ENCODE measurements at regions of chr9 and their contacts with region 1.

Region 1: GRCh38 chr9:14768405-14769229 is 46.1 kb upstream of the CER1 start:
- DNase-seq: peak in 1 of 2 donors; percentile 78
- H3K4me3 ChIP-seq: no peak overlapping the region
- H3K27ac ChIP-seq: no peak overlapping the region
- H3K4me1 ChIP-seq: peaks cover 0 to 4% (median 0%) of the 10 kb centered on the region in 4 donors
- H3K27me3 ChIP-seq: no peaks in the 10 kb centered on the region
- CTCF ChIP-seq: peak in 5 of 7 experiments; percentile 42 to 71 (median 56)
- EP300 ChIP-seq: no peak
- POLR2A ChIP-seq: no peak

Region 2: DNA sequence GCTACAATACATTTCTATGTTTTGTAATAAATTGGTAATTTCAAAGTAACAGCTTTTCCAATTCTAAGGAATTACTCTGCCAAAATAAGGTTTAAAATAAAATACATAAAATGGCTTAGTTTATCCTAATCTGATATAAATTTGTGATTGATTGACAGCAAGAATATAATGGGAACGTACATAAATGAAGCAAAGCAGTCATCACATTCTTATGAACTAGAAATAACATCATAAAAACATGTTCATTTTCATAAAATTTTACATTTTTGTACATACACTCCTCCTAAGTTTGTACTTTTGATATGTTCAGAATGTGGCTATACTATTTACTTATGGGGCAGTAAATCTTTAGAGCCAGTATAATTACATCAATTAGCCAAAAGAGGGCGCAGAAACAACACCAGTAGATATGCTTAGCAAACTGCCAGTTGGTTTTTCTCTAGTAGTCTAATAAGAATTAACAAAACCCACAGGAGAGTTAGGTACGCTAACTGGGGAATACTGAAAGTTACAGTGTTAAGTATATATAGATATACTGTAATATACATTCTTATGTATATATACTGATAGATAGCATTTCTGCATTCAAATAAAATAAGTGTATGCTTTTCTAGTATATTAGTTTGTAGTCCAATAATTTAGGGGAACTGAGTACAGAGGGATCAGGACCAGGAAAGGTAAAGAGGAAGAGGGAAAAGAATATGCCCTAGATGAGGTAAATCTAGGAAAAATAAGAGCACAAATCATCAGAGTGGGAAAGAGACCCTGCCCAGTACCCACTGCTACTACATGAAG is 152.2 kb before region 1 on chr9:
- intact Hi-C with region 1: loop called (anchors 10 kb)
- DNase-seq: peak in 1 of 2 donors; percentile 82
- H3K4me3 ChIP-seq: no peak overlapping the region
- H3K27ac ChIP-seq: no peak overlapping the region
- H3K4me1 ChIP-seq: peaks cover 0 to 15% (median 0%) of the 10 kb centered on the region in 4 donors
- H3K27me3 ChIP-seq: no peaks in the 10 kb centered on the region
- CTCF ChIP-seq: peak in 4 of 7 experiments; percentile 31 to 61 (median 40)
- EP300 ChIP-seq: no peak
- POLR2A ChIP-seq: no peak

Region 3: GRCh38 chr9:14722391-14723035 is 46.1 kb before region 1 on chr9 and contains the start of gene CER1:
- intact Hi-C with region 1: no loop called
- DNase-seq: no peak
- H3K4me3 ChIP-seq: no peak within 1 kb of the TSS
- H3K27ac ChIP-seq: no peak within 1 kb of the TSS
- H3K4me1 ChIP-seq: no peaks in the 10 kb centered on the region
- H3K27me3 ChIP-seq: peaks cover 0 to 17% (median 0%) of the 10 kb centered on the region in 3 donors
- CTCF ChIP-seq: no peak
- EP300 ChIP-seq: no peak
- POLR2A ChIP-seq: no peak
- total RNA-seq, gene CER1: not detected

Region 4: DNA sequence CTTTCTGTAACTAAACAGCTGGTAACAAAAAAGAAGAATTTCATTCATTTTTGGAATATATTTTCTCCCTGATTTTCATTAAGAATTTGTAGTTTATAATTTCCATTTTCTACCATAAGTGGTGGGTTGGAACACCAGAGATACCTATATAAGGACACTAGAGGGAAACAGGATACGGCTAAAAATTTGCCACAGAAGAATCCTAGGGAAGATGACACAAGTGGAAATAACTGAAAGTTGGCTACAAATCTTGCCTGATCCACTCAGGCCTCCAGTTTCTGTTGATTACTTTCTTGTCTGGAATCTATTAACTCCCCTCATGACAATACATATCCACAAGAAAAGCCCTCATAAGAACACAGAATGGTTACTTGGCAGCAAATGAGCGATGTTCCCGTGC is 94.8 kb after region 1 on chr9:
- intact Hi-C with region 1: no loop called
- DNase-seq: no peak
- H3K4me3 ChIP-seq: no peak overlapping the region
- H3K27ac ChIP-seq: no peak overlapping the region
- H3K4me1 ChIP-seq: no peaks in the 10 kb centered on the region
- H3K27me3 ChIP-seq: no peaks in the 10 kb centered on the region
- CTCF ChIP-seq: no peak
- EP300 ChIP-seq: no peak
- POLR2A ChIP-seq: no peak

Measured in stomach (tissue), 19 donors.